Caco-2 (cell line): ENCODE measurements at regions of chr6 and their contacts with region 1.

Region 1: DNA sequence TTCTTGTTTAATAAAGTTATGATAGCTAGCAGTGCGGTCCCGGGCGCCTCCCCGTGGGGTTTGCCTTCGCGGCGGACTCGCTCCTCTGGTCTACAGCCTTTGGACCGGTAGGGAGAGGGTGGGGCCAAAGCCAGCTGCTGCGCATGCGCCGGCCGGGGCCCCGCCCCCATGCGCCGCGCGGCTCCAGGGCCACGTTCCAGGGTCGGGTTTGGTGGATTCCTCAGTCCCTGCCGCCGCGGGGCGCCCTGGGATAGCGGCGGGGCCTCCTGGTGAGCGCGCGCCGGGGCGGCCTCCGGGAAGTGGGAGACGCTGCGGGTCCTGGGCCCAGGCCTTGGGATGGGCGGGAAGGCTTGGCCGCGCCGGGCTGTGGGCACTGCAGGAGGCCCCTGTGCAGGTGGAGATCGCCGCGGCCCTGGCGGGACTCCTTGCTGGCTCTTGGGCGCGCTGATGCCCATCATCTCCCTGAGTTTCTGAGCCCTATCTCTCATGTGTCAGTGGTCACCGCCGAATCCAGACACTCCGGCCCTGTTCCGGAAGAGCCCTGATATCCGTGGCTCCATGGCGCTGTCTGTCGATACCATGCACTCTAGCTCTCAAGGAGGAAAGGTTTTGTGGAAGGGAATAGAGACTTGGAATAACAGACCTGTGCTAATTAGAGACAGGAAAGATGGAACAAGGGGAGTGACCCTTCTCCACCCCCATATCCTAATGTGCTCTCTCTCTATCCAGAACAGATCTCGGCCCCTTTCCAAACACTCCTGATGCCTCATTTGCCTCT is at the start of gene VARS2:
- DNase-seq: peak; percentile 94 to 98
- H3K4me3 ChIP-seq: peak within 1 kb of the TSS; percentile 54
- H3K4me3 Mint-ChIP-seq: peak within 1 kb of the TSS; percentile 87
- H3K27ac Mint-ChIP-seq: peak within 1 kb of the TSS; percentile 92
- H3K4me1 ChIP-seq: peaks cover 11% of the 10 kb centered on the region
- H3K4me1 Mint-ChIP-seq: peaks cover 14% of the 10 kb centered on the region
- H3K27me3 ChIP-seq: no peaks in the 10 kb centered on the region
- H3K27me3 Mint-ChIP-seq: no peaks in the 10 kb centered on the region
- CTCF ChIP-seq: peak; percentile 9 to 31
- total RNA-seq, gene VARS2: 32.1 and 37.5 TPM in 2 replicates

Region 2: GRCh38 chr6:30418448-30418847 is 495.8 kb before region 1 on chr6:
- CTCF ChIA-PET with region 1: no interaction called
- POLR2A ChIA-PET with region 1: no interaction called
- intact Hi-C with region 1: no loop called
- DNase-seq: no peak
- H3K4me3 ChIP-seq: no peak overlapping the region
- H3K4me3 Mint-ChIP-seq: no peak overlapping the region
- H3K27ac Mint-ChIP-seq: no peak overlapping the region
- H3K4me1 ChIP-seq: no peaks in the 10 kb centered on the region
- H3K4me1 Mint-ChIP-seq: no peaks in the 10 kb centered on the region
- H3K27me3 ChIP-seq: no peaks in the 10 kb centered on the region
- H3K27me3 Mint-ChIP-seq: peaks cover 32% of the 10 kb centered on the region
- CTCF ChIP-seq: no peak

Region 3: DNA sequence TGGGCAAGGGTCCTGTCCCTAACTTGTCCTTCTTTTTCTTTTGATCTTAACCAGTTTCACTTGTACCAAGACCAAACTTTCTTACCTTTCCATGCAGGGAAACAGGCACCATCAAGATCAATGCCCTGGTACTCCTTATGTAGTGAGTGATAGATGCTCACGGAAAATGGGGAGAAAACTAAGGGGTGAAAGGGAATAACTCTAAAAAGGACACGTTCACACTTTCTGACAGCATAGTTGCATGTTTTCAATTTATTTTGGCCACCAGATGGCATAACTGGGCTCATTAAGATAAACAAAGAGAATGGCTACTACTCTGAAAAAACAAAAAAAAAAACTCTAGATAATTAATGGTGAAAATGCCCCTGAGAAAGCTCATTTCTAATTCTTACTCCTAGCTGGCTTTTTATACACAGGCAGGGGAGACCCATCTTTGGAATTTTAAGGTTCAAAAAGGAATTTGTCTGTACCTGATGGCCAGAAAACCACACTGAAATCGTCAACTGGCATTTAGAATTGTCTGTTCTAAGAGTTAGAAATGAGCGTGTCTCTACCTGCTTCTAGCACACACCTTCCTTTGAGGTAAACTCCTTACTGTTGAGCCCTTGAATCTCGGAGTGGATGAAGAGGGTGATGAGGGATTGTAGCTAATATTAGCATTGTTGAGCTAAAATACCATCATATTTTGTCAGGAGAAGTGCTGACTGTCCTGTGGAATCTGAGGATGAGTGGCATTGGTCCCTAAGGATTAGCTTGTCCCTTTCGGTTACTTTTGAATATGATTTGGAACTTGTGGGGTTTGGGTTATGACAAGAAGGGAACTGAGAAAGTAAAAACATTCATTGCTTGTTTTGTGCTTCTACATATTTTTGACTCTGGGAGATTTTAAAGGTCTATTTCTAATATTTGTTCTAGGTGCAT is 92.1 kb before region 1 on chr6:
- CTCF ChIA-PET with region 1: interaction called, 10 read pairs
- POLR2A ChIA-PET with region 1: no interaction called
- intact Hi-C with region 1: no loop called
- DNase-seq: peak in 1 of 2 experiments; percentile 44
- H3K4me3 ChIP-seq: no peak overlapping the region
- H3K4me3 Mint-ChIP-seq: peak overlapping the region; percentile 65
- H3K27ac Mint-ChIP-seq: peak overlapping the region; percentile 94
- H3K4me1 ChIP-seq: peaks cover 50% of the 10 kb centered on the region
- H3K4me1 Mint-ChIP-seq: peaks cover 42% of the 10 kb centered on the region
- H3K27me3 ChIP-seq: no peaks in the 10 kb centered on the region
- H3K27me3 Mint-ChIP-seq: no peaks in the 10 kb centered on the region
- CTCF ChIP-seq: peak; percentile 28 to 53

Region 4: DNA sequence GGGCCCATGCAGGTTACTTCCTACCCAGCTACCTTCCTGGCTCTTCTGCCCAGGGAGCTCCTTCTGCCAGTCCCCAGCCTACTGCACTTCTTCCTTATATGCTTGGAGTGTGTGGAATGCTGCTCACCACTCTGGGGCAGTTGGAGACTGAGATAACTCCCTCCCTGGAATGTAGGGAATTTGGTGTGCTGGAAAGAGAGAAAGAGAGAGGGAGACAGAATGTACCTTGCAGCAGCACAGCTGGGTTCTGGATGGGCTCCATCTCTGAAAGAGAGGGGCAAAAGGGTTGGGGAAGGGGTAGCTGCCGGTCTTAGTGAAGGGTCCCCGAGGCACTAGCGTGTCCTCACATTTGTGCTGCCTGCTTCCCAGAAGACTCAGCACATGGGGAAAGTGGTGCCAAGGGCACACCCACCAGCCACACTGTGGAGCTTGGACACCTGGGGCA is 70.2 kb before region 1 on chr6:
- CTCF ChIA-PET with region 1: interaction called, 11 read pairs
- POLR2A ChIA-PET with region 1: no interaction called
- intact Hi-C with region 1: no loop called
- DNase-seq: peak; percentile 69 to 81
- H3K4me3 ChIP-seq: no peak overlapping the region
- H3K4me3 Mint-ChIP-seq: peak overlapping the region; percentile 13
- H3K27ac Mint-ChIP-seq: peak overlapping the region; percentile 79
- H3K4me1 ChIP-seq: peaks cover 49% of the 10 kb centered on the region
- H3K4me1 Mint-ChIP-seq: peaks cover 36% of the 10 kb centered on the region
- H3K27me3 ChIP-seq: no peaks in the 10 kb centered on the region
- H3K27me3 Mint-ChIP-seq: no peaks in the 10 kb centered on the region
- CTCF ChIP-seq: peak in 1 of 2 experiments; percentile 28

Region 5: DNA sequence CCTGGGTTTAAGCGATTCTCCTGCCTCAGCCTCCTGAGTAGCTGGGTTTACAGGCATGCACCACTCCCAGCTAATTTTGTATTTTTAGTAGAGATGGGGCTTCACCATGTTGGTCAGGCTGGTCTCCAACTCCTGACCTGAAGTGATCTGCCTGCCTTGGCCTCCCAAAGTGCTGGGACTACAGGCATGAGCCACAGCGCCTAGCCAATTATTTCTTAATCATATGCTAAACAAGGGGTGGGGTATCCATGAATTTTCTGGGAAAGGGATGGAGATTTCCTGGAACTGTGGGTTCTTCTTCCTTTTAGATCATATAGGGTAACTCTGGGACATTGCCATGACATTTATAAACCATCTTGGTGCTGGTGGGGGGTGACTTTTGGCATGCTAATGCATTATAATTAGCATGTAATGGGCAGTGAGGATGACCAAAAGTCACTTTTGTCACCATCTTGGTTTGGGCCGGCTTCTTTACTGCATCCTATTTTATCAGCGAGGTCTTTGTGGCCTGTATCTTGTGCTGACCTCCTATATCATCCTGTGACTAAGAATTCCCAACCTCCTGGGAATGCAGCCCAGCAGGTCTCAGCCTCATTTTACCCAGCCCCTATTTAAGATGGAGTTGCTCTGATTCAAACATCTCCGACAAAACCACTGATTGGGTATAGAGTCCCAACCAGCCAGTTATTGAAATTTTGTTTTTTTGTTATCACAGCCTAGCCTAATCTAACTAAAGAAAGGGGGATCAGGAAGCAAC is 59.8 kb before region 1 on chr6:
- CTCF ChIA-PET with region 1: no interaction called
- POLR2A ChIA-PET with region 1: no interaction called
- intact Hi-C with region 1: no loop called
- DNase-seq: no peak
- H3K4me3 ChIP-seq: no peak overlapping the region
- H3K4me3 Mint-ChIP-seq: no peak overlapping the region
- H3K27ac Mint-ChIP-seq: no peak overlapping the region
- H3K4me1 ChIP-seq: peaks cover 16% of the 10 kb centered on the region
- H3K4me1 Mint-ChIP-seq: peaks cover 25% of the 10 kb centered on the region
- H3K27me3 ChIP-seq: no peaks in the 10 kb centered on the region
- H3K27me3 Mint-ChIP-seq: no peaks in the 10 kb centered on the region
- CTCF ChIP-seq: no peak

Region 6: GRCh38 chr6:30942338-30943060 is 28.2 kb after region 1 on chr6:
- CTCF ChIA-PET with region 1: interaction called, 13 read pairs
- POLR2A ChIA-PET with region 1: no interaction called
- intact Hi-C with region 1: no loop called
- DNase-seq: peak; percentile 91 to 94
- H3K4me3 ChIP-seq: no peak overlapping the region
- H3K4me3 Mint-ChIP-seq: peak overlapping the region; percentile 55
- H3K27ac Mint-ChIP-seq: peak overlapping the region; percentile 80
- H3K4me1 ChIP-seq: peaks cover 23% of the 10 kb centered on the region
- H3K4me1 Mint-ChIP-seq: peaks cover 23% of the 10 kb centered on the region
- H3K27me3 ChIP-seq: no peaks in the 10 kb centered on the region
- H3K27me3 Mint-ChIP-seq: no peaks in the 10 kb centered on the region
- CTCF ChIP-seq: peak; percentile 52 to 67

Region 7: DNA sequence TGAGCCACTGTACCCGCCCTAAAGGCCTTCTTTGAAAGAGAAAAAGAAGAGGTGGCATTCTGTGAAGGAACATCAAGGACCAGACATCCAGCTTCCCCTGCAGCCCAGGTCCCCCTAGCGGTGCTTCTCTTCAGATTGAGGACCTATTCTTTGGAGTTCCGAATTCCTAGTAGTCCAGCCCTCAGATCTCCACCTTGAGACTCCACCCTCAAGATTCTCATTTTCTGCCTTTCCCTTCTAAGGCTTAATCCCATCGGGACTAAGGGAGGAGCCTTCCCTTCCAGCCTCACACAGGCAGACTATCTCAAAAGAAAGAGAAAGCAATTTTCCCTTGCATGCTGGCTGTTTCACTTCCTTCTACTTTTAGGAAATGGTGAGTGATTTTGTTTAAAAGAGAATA is 128.5 kb after region 1 on chr6:
- CTCF ChIA-PET with region 1: interaction called, 11 read pairs
- POLR2A ChIA-PET with region 1: no interaction called
- intact Hi-C with region 1: loop called (anchors 1 kb)
- DNase-seq: peak; percentile 57 to 66
- H3K4me3 ChIP-seq: no peak overlapping the region
- H3K4me3 Mint-ChIP-seq: no peak overlapping the region
- H3K27ac Mint-ChIP-seq: no peak overlapping the region
- H3K4me1 ChIP-seq: peaks cover 6% of the 10 kb centered on the region; the same call in 1 of the 2 replicates
- H3K4me1 Mint-ChIP-seq: no peaks in the 10 kb centered on the region
- H3K27me3 ChIP-seq: no peaks in the 10 kb centered on the region
- H3K27me3 Mint-ChIP-seq: no peaks in the 10 kb centered on the region
- CTCF ChIP-seq: peak; percentile 52 to 68

Region 8: DNA sequence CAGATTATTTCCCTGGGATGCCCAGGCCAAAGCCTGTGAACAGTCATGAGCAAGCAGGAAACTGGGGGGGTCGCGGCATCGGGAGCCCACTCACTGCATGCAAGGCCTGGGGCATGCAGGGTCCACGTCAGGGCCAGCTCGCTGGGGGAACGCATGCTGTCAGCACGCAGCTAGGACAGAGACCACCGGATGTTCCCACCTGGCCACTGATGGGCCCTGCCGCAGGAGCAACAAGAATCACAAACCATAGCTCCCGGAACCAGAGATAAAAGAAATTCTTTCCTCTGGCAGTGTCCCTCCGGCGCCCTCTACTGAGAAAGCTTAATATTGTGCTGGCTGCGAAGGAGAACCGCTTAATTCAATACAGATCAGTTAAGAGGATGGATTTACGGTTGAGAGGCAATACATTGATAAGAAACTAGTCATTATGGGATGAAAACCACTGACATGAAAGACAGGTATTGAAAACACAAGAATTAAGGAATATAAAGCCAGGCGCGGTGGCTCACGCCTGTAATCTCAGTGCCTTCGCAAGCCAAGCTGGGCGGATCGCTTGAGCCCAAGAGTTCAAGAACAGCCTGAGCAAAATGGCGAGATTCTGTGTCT is 165.5 kb after region 1 on chr6:
- CTCF ChIA-PET with region 1: interaction called, 51 read pairs
- POLR2A ChIA-PET with region 1: interaction called, 5 read pairs
- intact Hi-C with region 1: loop called (anchors 2 kb)
- DNase-seq: peak; percentile 71 to 78
- H3K4me3 ChIP-seq: no peak overlapping the region
- H3K4me3 Mint-ChIP-seq: no peak overlapping the region
- H3K27ac Mint-ChIP-seq: no peak overlapping the region
- H3K4me1 ChIP-seq: 0 out of 2 replicates have a peak, but pooled peaks cover 5% of the 10 kb centered on the region
- H3K4me1 Mint-ChIP-seq: peaks cover 8% of the 10 kb centered on the region
- H3K27me3 ChIP-seq: no peaks in the 10 kb centered on the region
- H3K27me3 Mint-ChIP-seq: peaks cover 5% of the 10 kb centered on the region
- CTCF ChIP-seq: peak; percentile 63 to 82